ENCODE measurements at regions of chr9 and their contacts with region 1.

Region 1: GRCh38 chr9:35690431-35691333 is 957 bp upstream of the TPM2 start:
- DNase-seq: no peak
- H3K4me3 ChIP-seq: peak overlapping the region; percentile 98
- H3K27ac ChIP-seq: peak overlapping the region; percentile 97
- H3K27me3 ChIP-seq: no peaks in the 10 kb centered on the region
- CTCF ChIP-seq: no peak

Region 2: DNA sequence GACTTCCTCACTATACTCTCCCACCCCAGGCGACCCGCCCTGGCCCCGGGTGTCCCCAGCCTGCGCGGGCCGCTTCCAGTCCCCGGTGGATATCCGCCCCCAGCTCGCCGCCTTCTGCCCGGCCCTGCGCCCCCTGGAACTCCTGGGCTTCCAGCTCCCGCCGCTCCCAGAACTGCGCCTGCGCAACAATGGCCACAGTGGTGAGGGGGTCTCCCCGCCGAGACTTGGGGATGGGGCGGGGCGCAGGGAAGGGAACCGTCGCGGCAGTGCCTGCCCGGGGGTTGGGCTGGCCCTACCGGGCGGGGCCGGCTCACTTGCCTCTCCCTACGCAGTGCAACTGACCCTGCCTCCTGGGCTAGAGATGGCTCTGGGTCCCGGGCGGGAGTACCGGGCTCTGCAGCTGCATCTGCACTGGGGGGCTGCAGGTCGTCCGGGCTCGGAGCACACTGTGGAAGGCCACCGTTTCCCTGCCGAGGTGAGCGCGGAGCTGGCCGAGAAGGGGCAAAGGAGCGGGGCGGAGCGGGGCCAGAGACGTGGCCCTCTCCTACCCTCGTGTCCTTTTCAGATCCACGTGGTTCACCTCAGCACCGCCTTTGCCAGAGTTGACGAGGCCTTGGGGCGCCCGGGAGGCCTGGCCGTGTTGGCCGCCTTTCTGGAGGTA is 14.8 kb before region 1 on chr9:
- CTCF ChIA-PET with region 1: no interaction called
- POLR2A ChIA-PET with region 1: interaction called, 44 read pairs
- DNase-seq: no peak
- H3K4me3 ChIP-seq: peak overlapping the region; percentile 51
- H3K27ac ChIP-seq: no peak overlapping the region
- H3K27me3 ChIP-seq: no peaks in the 10 kb centered on the region
- CTCF ChIP-seq: no peak

Region 3: DNA sequence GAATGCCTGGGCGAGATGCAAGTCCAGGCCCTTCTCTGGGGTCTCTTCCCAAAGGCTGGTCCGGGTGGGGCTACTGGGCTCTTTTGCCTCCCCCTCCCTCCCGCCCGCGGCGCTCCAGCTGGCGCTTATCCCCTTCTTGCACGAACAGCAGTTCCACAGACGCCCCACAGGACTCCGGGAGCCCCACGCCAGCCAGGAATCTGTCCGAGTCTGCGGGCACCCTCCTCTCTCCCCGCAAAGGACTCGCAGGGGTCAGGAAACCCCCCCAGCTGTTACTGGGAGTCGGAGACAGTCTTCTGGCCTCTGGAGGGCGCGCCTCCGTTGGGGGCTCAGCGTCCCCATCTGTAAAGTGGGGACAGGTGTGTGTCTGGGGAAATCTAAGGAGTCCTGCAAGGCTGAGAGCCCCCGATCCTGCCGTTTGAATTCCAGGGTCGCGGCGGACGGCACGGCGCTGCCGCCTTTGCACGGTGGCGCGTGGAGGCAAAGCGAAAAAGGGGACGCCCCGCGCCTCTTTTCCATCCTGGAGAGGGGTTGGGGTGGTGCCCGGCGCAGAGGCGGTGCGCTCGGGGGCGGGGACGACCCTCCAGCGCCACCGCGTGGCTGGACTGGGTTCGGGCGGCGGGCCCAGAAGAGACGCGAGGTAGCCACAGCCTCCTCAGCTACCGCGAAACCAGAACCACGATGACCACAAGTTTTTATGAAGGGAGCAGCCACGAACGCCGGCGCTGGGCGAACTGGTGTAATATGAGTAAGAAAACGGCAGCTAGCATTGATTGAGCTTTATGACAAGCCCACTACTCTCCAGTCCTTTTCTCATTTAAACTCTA is 475.6 kb after region 1 on chr9:
- CTCF ChIA-PET with region 1: no interaction called
- POLR2A ChIA-PET with region 1: no interaction called
- DNase-seq: no peak
- H3K4me3 ChIP-seq: peak overlapping the region; percentile 63
- H3K27ac ChIP-seq: peak overlapping the region; percentile 57
- H3K27me3 ChIP-seq: no peaks in the 10 kb centered on the region
- CTCF ChIP-seq: peak; percentile 84